ENCODE measurements at regions of chr5 and their contacts with region 1.

Region 1: DNA sequence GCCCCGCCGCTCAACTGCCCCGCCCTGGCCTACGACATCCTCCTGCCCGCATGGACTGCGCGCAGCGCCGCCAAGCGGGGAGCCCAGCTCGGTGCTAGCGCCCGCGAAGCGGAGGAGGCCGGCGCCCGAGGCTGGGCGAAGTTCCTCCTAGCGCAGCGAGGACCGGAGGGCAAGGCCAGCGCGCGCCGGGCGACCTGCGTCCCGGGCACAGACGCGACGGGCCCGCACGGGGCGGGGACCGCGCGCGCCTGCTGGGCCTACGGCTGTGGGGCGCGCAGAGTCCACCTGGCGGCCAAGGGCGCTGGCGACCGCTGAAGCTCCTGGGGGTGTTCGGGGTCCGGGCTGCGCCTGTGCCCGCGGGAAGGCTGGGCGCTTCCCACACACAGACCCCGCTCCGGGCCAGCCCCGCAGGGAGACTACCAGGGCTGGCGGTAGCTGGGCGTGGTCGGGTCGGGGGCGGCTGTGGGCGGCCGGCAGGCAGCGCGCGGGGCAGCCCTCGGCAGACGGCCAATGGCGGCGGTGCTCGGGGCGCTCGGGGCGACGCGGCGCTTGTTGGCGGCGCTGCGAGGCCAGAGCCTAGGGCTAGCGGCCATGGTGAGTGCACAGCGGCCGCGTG is at the start of gene PCBD2:
- DNase-seq: peak; percentile 94
- H3K4me3 Mint-ChIP-seq: peak within 1 kb of the TSS; percentile 96
- H3K27ac Mint-ChIP-seq: peak within 1 kb of the TSS; percentile 94
- H3K4me1 Mint-ChIP-seq: no peaks in the 10 kb centered on the region
- H3K27me3 Mint-ChIP-seq: no peaks in the 10 kb centered on the region
- CTCF ChIP-seq: peak; percentile 95
- total RNA-seq, gene PCBD2: 27.3 and 34.5 TPM in 2 replicates

Region 2: GRCh38 chr5:134041570-134042411 is 862.9 kb before region 1 on chr5:
- CTCF ChIA-PET with region 1: no interaction called
- POLR2A ChIA-PET with region 1: no interaction called
- intact Hi-C with region 1: no loop called
- DNase-seq: no peak
- H3K4me3 Mint-ChIP-seq: no peak overlapping the region
- H3K27ac Mint-ChIP-seq: no peak overlapping the region
- H3K4me1 Mint-ChIP-seq: peaks cover 11% of the 10 kb centered on the region
- H3K27me3 Mint-ChIP-seq: no peaks in the 10 kb centered on the region
- CTCF ChIP-seq: no peak

Region 3: DNA sequence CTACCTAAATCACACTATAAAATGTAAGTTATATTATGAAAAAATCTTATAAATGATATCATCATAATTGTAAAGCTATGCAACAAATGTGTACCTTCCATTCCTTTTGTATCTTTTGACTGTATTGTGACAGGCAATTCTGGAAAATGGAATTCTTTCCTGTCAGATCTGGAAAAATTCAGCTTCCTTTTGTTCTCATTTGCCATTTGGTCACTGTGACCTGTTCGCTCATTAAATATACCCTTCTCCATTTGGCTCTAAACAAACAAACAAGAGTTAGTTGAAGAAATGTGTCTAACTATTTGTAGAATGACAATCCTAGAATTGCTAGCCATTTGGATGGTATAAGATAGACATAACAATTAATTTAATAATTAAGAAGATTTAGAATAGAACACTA is 600.4 kb before region 1 on chr5:
- CTCF ChIA-PET with region 1: interaction called, 4 read pairs
- POLR2A ChIA-PET with region 1: no interaction called
- intact Hi-C with region 1: loop called (anchors 2 kb)
- DNase-seq: no peak
- H3K4me3 Mint-ChIP-seq: no peak overlapping the region
- H3K27ac Mint-ChIP-seq: no peak overlapping the region
- H3K4me1 Mint-ChIP-seq: no peaks in the 10 kb centered on the region
- H3K27me3 Mint-ChIP-seq: no peaks in the 10 kb centered on the region
- CTCF ChIP-seq: no peak

Region 4: DNA sequence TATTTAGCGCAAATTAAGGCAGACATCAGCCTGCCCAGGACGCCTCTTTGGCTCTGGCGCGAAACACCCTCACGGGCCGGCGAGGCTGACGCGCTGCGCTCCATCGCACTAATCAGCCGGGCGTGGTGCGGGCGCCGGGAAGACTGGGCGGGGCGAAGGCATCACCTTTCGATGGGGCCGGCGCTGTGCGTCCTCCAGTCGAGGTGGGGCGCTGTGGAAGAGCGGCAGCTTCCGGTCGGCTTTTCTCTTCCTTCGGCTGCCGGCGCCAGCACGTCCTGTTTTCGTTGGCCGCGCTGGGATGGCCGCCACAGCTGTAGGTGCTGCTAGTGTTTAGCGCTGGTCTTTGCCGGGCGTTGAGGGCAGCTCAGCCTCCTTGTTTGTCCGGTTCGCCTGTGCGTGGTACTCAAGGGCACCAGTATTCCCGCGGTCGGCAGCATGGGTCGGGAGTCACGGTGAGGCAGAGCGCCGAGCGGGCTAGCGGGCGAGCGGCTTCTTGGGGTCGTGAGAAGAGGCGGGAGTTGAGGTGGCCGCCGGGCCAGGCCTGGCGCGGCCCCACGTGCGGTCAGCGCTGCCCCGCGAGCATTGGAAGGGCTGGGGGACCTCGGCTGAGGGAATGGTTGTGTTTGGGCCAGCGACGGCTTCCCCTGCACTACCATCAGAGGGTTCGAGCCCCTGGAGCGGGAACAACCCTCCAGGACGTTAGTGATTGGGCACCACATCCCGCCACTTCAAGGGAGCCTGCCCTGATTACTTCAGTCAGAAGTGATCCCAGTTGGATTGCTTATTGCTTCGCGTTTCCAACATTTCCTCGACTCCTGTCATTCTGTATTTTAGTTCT is 146.0 kb before region 1 on chr5 and contains the start of gene DDX46:
- CTCF ChIA-PET with region 1: interaction called, 11 read pairs
- POLR2A ChIA-PET with region 1: interaction called, 7 read pairs
- intact Hi-C with region 1: no loop called
- DNase-seq: peak; percentile 98
- H3K4me3 Mint-ChIP-seq: peak within 1 kb of the TSS; percentile 100
- H3K27ac Mint-ChIP-seq: peak within 1 kb of the TSS; percentile 95
- H3K4me1 Mint-ChIP-seq: peaks cover 19% of the 10 kb centered on the region
- H3K27me3 Mint-ChIP-seq: no peaks in the 10 kb centered on the region
- CTCF ChIP-seq: peak; percentile 91
- total RNA-seq, gene DDX46: 57.7 and 77.0 TPM in 2 replicates

Region 5: GRCh38 chr5:134845852-134846640 is 58.7 kb before region 1 on chr5 and contains the start of gene C5orf24:
- CTCF ChIA-PET with region 1: interaction called, 8 read pairs
- POLR2A ChIA-PET with region 1: interaction called, 22 read pairs
- intact Hi-C with region 1: loop called (anchors 2 kb)
- DNase-seq: peak; percentile 97
- H3K4me3 Mint-ChIP-seq: peak within 1 kb of the TSS; percentile 96
- H3K27ac Mint-ChIP-seq: peak within 1 kb of the TSS; percentile 98
- H3K4me1 Mint-ChIP-seq: peaks cover 25% of the 10 kb centered on the region
- H3K27me3 Mint-ChIP-seq: no peaks in the 10 kb centered on the region
- CTCF ChIP-seq: no peak
- total RNA-seq, gene C5orf24: 61.4 and 66.0 TPM in 2 replicates

Region 6: GRCh38 chr5:134873987-134874830 is 30.5 kb before region 1 on chr5 and contains the start of gene TXNDC15:
- CTCF ChIA-PET with region 1: interaction called, 5 read pairs
- POLR2A ChIA-PET with region 1: interaction called, 32 read pairs
- intact Hi-C with region 1: loop called (anchors 1 kb)
- DNase-seq: peak; percentile 87
- H3K4me3 Mint-ChIP-seq: peak within 1 kb of the TSS; percentile 98
- H3K27ac Mint-ChIP-seq: peak within 1 kb of the TSS; percentile 97
- H3K4me1 Mint-ChIP-seq: peaks cover 28% of the 10 kb centered on the region
- H3K27me3 Mint-ChIP-seq: no peaks in the 10 kb centered on the region
- CTCF ChIP-seq: no peak
- total RNA-seq, gene TXNDC15: 57.0 and 66.0 TPM in 2 replicates

Region 7: GRCh38 chr5:134917070-134917815 is 12.5 kb after region 1 on chr5:
- CTCF ChIA-PET with region 1: interaction called, 22 read pairs
- POLR2A ChIA-PET with region 1: interaction called, 7 read pairs
- intact Hi-C with region 1: no loop called
- DNase-seq: no peak
- H3K4me3 Mint-ChIP-seq: no peak overlapping the region
- H3K27ac Mint-ChIP-seq: no peak overlapping the region
- H3K4me1 Mint-ChIP-seq: no peaks in the 10 kb centered on the region
- H3K27me3 Mint-ChIP-seq: no peaks in the 10 kb centered on the region
- CTCF ChIP-seq: peak; percentile 33

Measured in MCF 10A (cell line).